ENCODE measurements at regions of chr1 and their contacts with region 1.

Region 1: GRCh38 chr1:211578640-211579433 is at the start of gene SLC30A1:
- DNase-seq: peak; percentile 98 to 100 (median 99)
- ATAC-seq: peak; percentile 92
- H3K4me3 ChIP-seq: peak within 1 kb of the TSS; percentile 96
- H3K4me3 Mint-ChIP-seq: peak within 1 kb of the TSS; percentile 97
- H3K27ac ChIP-seq: peak within 1 kb of the TSS; percentile 41 to 78
- H3K27ac Mint-ChIP-seq: peak within 1 kb of the TSS; percentile 86
- H3K4me1 ChIP-seq: peaks cover 19% of the 10 kb centered on the region
- H3K4me1 Mint-ChIP-seq: peaks cover 49% of the 10 kb centered on the region
- H3K27me3 ChIP-seq: no peaks in the 10 kb centered on the region
- H3K27me3 Mint-ChIP-seq: no peaks in the 10 kb centered on the region
- CTCF ChIP-seq: no peak
- total RNA-seq, gene SLC30A1: 6.0 TPM

Region 2: GRCh38 chr1:211258756-211259637 is 319.8 kb before region 1 on chr1 and contains the start of gene RCOR3:
- CTCF ChIA-PET with region 1: no interaction called
- POLR2A ChIA-PET with region 1: interaction called, 6 read pairs
- intact Hi-C with region 1: loop called (anchors 5 to 10 kb)
- DNase-seq: peak; percentile 88 to 95 (median 92)
- ATAC-seq: peak; percentile 76
- H3K4me3 ChIP-seq: peak within 1 kb of the TSS; percentile 89
- H3K4me3 Mint-ChIP-seq: peak within 1 kb of the TSS; percentile 94
- H3K27ac ChIP-seq: peak within 1 kb of the TSS; percentile 77 to 87
- H3K27ac Mint-ChIP-seq: peak within 1 kb of the TSS; percentile 94
- H3K4me1 ChIP-seq: peaks cover 16% of the 10 kb centered on the region
- H3K4me1 Mint-ChIP-seq: peaks cover 26% of the 10 kb centered on the region
- H3K27me3 ChIP-seq: no peaks in the 10 kb centered on the region
- H3K27me3 Mint-ChIP-seq: no peaks in the 10 kb centered on the region
- CTCF ChIP-seq: peak; percentile 59
- total RNA-seq, gene RCOR3: 55.7 to 60.5 TPM

Region 3: DNA sequence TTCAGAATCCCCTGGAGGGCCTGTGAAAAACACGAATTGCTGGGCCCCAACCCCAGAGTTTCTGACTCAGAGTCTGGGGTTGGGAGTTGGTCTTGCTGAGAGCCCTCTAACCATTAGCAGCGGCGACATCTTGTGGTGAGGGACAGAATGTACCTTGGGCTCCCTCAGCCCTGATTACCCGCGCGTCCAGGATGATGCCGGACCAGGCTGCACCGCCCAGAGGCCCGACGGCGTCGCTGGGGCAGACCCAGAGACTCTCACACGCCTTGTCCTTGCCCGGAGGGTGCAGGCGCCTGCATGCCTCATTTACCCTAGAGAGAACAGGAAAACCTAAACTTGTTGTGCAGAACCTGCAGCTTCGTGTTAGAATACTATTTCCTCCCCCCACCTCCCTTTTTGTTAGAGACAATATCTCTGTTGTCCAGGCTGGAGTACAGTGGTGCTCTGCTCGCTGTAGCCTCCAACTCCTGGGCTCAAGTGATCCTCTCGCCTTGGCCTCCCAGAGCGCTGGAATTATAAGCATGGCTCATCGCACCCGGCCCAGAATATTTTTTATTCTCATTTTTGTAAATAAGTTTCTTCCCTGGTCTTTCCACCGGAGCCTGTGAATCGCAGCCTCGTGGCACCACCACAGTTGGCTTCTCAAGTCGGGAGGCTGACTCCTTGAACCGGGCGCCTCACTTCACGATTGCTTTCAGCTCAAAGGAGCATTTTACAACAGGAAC is 64.6 kb before region 1 on chr1:
- CTCF ChIA-PET with region 1: interaction called, 4 read pairs
- POLR2A ChIA-PET with region 1: no interaction called
- intact Hi-C with region 1: loop called in 1 of 2 experiments (anchors 5 kb)
- DNase-seq: peak; percentile 47 to 81 (median 61)
- ATAC-seq: peak; percentile 60
- H3K4me3 ChIP-seq: no peak overlapping the region
- H3K4me3 Mint-ChIP-seq: peak overlapping the region; percentile 82
- H3K27ac ChIP-seq: no peak overlapping the region
- H3K27ac Mint-ChIP-seq: no peak overlapping the region
- H3K4me1 ChIP-seq: peaks cover 20% of the 10 kb centered on the region
- H3K4me1 Mint-ChIP-seq: peaks cover 22% of the 10 kb centered on the region
- H3K27me3 ChIP-seq: no peaks in the 10 kb centered on the region
- H3K27me3 Mint-ChIP-seq: no peaks in the 10 kb centered on the region
- CTCF ChIP-seq: peak; percentile 69

Region 4: DNA sequence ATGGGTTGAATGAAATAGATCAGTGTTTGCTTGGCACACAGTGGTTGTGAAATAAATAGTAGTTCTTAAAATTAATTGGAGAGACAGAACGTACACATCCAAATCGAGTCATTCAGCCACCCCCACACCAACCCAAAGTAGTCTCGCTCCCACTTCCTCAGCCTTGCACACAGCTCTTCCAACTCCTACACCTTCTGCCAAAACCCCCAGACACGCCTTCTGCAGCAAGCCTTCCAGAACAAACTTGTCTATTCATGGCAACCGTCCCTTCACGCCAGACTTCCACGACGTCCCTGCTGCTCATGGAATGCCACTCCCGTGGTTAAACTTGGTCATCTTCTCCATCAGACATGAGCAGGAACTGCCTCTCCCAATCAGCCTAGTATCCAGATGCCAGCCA is 49.4 kb before region 1 on chr1:
- CTCF ChIA-PET with region 1: no interaction called
- POLR2A ChIA-PET with region 1: no interaction called
- intact Hi-C with region 1: no loop called
- DNase-seq: no peak
- ATAC-seq: no peak
- H3K4me3 ChIP-seq: no peak overlapping the region
- H3K4me3 Mint-ChIP-seq: no peak overlapping the region
- H3K27ac ChIP-seq: no peak overlapping the region
- H3K27ac Mint-ChIP-seq: no peak overlapping the region
- H3K4me1 ChIP-seq: peaks cover 11% of the 10 kb centered on the region
- H3K4me1 Mint-ChIP-seq: peaks cover 14% of the 10 kb centered on the region
- H3K27me3 ChIP-seq: no peaks in the 10 kb centered on the region
- H3K27me3 Mint-ChIP-seq: no peaks in the 10 kb centered on the region
- CTCF ChIP-seq: no peak

Region 5: GRCh38 chr1:211654838-211655787 is 76.3 kb after region 1 on chr1:
- CTCF ChIA-PET with region 1: interaction called, 5 read pairs
- POLR2A ChIA-PET with region 1: interaction called, 3 read pairs
- intact Hi-C with region 1: loop called (anchors 1 kb)
- DNase-seq: peak; percentile 68 to 88 (median 78)
- ATAC-seq: peak; percentile 98
- H3K4me3 ChIP-seq: no peak overlapping the region
- H3K4me3 Mint-ChIP-seq: no peak overlapping the region
- H3K27ac ChIP-seq: no peak overlapping the region
- H3K27ac Mint-ChIP-seq: no peak overlapping the region
- H3K4me1 ChIP-seq: peaks cover 5% of the 10 kb centered on the region
- H3K4me1 Mint-ChIP-seq: no peaks in the 10 kb centered on the region
- H3K27me3 ChIP-seq: no peaks in the 10 kb centered on the region
- H3K27me3 Mint-ChIP-seq: no peaks in the 10 kb centered on the region
- CTCF ChIP-seq: peak; percentile 89

Region 6: GRCh38 chr1:212035123-212035834 is 456.4 kb after region 1 on chr1 and contains the starts of genes DTL and INTS7:
- CTCF ChIA-PET with region 1: no interaction called
- POLR2A ChIA-PET with region 1: no interaction called
- intact Hi-C with region 1: loop called in 1 of 2 experiments (anchors 5 kb)
- DNase-seq: peak; percentile 94 to 100 (median 98)
- ATAC-seq: peak; percentile 88
- H3K4me3 ChIP-seq: peak within 1 kb of the TSS; percentile 83
- H3K4me3 Mint-ChIP-seq: peak within 1 kb of the TSS; percentile 95
- H3K27ac ChIP-seq: peak within 1 kb of the TSS; percentile 55 to 77
- H3K27ac Mint-ChIP-seq: peak within 1 kb of the TSS; percentile 95
- H3K4me1 ChIP-seq: peaks cover 16% of the 10 kb centered on the region
- H3K4me1 Mint-ChIP-seq: peaks cover 66% of the 10 kb centered on the region
- H3K27me3 ChIP-seq: no peaks in the 10 kb centered on the region
- H3K27me3 Mint-ChIP-seq: no peaks in the 10 kb centered on the region
- CTCF ChIP-seq: peak; percentile 99
- total RNA-seq, gene DTL: 0.49 to 0.64 TPM
- total RNA-seq, gene INTS7: 2.9 to 3.2 TPM

Region 7: DNA sequence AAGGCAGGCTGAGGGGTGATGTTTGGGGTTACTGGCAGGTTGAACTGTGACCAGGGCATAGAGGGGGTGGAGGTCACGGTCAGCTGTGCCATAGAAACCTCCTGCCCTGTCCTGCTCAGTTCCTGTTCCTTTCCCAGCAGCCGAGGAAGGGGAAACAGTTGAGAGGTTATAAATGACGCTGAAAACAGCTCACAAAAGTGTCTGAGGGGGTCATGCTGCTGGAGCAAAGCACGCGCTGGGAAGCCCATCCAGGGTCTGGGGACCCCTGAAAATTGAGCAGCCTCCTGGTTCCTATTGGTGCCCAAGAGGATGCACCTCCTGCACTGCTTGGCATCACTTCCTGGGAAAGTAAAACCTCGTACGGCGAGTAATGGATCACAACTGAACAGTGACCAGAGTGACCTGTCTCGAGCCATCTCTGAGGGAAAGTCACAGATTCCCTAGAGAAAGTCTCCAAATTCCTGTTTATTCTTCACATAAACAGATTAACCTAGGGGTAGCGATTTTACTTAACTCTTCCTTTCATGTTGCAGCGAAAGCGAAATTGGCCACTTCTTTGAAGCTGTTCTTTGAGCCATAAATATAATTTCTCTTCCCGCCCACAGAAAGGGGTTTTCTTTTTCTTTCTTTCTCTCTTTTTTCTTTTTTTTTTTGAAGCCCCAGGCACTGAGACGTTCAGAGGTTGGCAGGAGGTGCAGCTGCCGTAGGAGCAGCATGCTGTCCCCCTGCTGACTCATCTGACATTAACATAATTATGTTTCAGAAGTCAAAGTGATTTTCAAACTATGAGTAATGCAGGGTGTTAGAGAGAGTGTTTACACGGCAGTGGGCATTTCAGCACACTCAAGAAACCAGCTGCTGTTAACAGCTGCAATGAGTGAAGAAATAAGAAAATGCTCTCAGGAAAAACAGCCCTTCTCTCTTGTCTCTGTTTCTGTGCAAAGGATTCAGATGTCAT is 988.0 kb after region 1 on chr1:
- CTCF ChIA-PET with region 1: no interaction called
- POLR2A ChIA-PET with region 1: no interaction called
- intact Hi-C with region 1: loop called in 1 of 2 experiments (anchors 10 kb)
- DNase-seq: peak in 13 of 14 experiments; percentile 11 to 80 (median 46)
- ATAC-seq: peak; percentile 99
- H3K4me3 ChIP-seq: peak overlapping the region; percentile 66
- H3K4me3 Mint-ChIP-seq: peak overlapping the region; percentile 99
- H3K27ac ChIP-seq: no peak overlapping the region
- H3K27ac Mint-ChIP-seq: peak overlapping the region; percentile 62
- H3K4me1 ChIP-seq: peaks cover 6% of the 10 kb centered on the region
- H3K4me1 Mint-ChIP-seq: peaks cover 16% of the 10 kb centered on the region
- H3K27me3 ChIP-seq: no peaks in the 10 kb centered on the region
- H3K27me3 Mint-ChIP-seq: peaks cover under 1% of the 10 kb centered on the region
- CTCF ChIP-seq: no peak

Measured in CD4-positive, alpha-beta T cell (primary cell).